ENCODE measurements at regions of chr19 and their contacts with region 1.

Region 1: DNA sequence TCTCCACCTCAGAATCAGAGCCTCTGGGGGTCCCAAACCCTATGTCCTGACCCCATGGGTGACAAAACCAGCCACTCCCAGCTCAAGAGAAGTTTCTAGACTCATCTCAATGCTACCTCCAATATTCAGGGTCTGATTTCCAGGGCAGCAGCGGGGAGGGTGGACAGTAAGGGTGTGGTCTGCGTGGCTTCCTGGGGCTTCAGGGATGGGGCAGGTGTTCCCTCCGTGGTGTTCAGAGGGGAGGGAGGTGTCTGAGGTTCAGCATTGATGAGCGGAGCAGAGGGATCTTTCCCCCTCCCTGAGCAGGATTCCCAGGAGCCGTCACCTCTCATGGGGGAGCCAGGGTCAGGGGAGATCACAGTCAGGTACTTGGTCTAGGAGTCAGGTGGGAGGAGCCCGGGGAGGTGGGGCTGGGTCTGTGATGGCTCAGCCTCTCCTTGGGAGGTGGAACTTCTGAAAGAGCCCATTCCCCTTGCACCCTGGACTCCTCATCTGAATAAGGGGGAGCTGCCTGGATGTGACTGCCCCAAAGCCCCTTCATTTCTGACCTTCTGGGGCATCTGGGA is 2.9 kb downstream of the LILRA2 start:
- DNase-seq: no peak

Region 2: DNA sequence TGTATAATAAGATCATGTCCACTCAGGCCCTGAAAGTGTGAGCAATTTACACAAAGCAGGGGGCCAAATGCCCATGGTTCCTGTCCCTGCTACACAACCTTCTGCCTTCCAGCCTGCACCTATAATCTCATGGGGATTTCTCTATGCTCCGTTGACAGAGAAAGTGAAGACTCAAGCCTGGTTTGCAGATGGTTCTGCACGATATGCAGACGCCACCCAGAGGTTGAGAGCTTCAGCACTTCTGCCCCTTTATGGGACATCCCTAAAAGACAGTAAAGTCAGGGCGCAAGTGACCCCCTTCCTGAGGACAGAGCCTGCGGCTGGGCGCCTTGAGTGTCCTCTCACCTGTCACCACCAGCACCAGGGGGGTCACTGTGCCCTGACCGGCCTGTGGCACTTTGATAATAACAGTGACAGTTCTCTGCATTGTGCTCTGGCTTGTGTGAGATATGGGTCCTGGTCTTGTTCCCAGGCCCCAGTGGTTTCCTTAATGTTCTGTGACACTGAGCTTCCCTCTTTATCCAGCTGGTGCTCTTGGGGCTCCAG is 278.7 kb before region 1 on chr19:
- intact Hi-C with region 1: loop called (anchors 5 kb)
- DNase-seq: no peak

Region 3: GRCh38 chr19:54430306-54431254 is 145.9 kb before region 1 on chr19:
- intact Hi-C with region 1: no loop called
- DNase-seq: no peak